ENCODE measurements at regions of chr7 and their contacts with region 1.

Region 1: GRCh38 chr7:127365164-127365956 is 27.1 kb downstream of the ZNF800 start:
- DNase-seq: no peak
- ATAC-seq: no peak
- H3K4me3 ChIP-seq: no peak overlapping the region
- H3K27ac ChIP-seq: no peak overlapping the region
- H3K4me1 ChIP-seq: no peaks in the 10 kb centered on the region
- H3K27me3 ChIP-seq: no peaks in the 10 kb centered on the region
- CTCF ChIP-seq: no peak
- EP300 ChIP-seq: no peak
- POLR2A ChIP-seq: no peak
- RAD21 ChIP-seq: no peak

Region 2: GRCh38 chr7:127290801-127291361 is 74.5 kb before region 1 on chr7:
- CTCF ChIA-PET with region 1: no interaction called
- POLR2A ChIA-PET with region 1: no interaction called
- RAD21 ChIA-PET with region 1: no interaction called
- SMC1A ChIA-PET with region 1: no interaction called
- in situ Hi-C with region 1: no loop called
- intact Hi-C with region 1: no loop called
- DNase-seq: no peak
- ATAC-seq: no peak
- H3K4me3 ChIP-seq: no peak overlapping the region
- H3K27ac ChIP-seq: no peak overlapping the region
- H3K4me1 ChIP-seq: no peaks in the 10 kb centered on the region
- H3K27me3 ChIP-seq: no peaks in the 10 kb centered on the region
- CTCF ChIP-seq: no peak
- EP300 ChIP-seq: no peak
- POLR2A ChIP-seq: no peak
- RAD21 ChIP-seq: no peak

Region 3: DNA sequence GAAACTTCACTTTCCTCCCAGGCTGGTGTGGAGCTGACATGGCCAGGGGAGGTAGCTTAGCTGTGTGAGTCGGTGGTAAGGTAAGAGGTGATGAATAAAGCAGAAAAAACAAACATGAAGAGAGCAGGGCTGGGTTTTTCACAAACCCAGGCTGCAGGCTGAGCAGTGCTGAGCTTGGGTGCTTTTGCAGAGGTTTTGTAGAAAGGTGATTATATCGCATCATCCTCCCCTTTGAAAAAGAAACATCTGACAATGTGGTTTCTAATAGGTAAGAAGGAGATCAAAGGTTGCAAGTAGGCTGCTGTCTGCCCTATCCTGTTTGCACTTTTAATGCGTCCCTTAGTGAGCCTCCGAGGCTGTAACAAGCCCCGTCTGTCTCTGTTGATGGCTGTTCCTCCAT is 43.0 kb before region 1 on chr7:
- CTCF ChIA-PET with region 1: no interaction called
- POLR2A ChIA-PET with region 1: no interaction called
- RAD21 ChIA-PET with region 1: no interaction called
- SMC1A ChIA-PET with region 1: no interaction called
- in situ Hi-C with region 1: no loop called
- intact Hi-C with region 1: no loop called
- DNase-seq: no peak
- ATAC-seq: no peak
- H3K4me3 ChIP-seq: no peak overlapping the region
- H3K27ac ChIP-seq: no peak overlapping the region
- H3K4me1 ChIP-seq: no peaks in the 10 kb centered on the region
- H3K27me3 ChIP-seq: peaks cover 0 to 2% of the 10 kb centered on the region in 2 experiments; a peak in 2 of 4 replicates
- CTCF ChIP-seq: no peak
- EP300 ChIP-seq: no peak
- POLR2A ChIP-seq: no peak
- RAD21 ChIP-seq: no peak

Region 4: DNA sequence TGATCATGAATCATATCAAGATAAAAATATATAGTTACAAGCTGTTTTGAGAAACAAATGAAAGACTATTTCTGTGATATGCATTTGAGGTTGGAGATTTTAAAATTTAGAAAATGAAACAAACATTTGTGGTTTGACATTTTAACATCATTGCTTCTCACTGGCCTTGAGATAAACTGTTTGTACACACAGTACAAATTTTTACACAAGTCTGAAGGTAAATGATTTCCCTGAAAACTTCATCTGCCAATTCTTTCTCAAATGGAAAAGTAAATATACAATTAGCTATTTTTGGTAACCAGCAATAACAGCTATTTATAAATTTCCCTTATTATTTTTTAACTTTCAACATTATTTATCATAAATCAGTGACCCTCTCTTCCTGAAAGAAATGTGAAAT is 11.5 kb before region 1 on chr7:
- CTCF ChIA-PET with region 1: interaction called, 18 read pairs
- POLR2A ChIA-PET with region 1: no interaction called
- RAD21 ChIA-PET with region 1: interaction called, 3 read pairs
- SMC1A ChIA-PET with region 1: interaction called, 4 read pairs
- in situ Hi-C with region 1: no loop called
- intact Hi-C with region 1: no loop called
- DNase-seq: no peak
- ATAC-seq: no peak
- H3K4me3 ChIP-seq: no peak overlapping the region
- H3K27ac ChIP-seq: no peak overlapping the region
- H3K4me1 ChIP-seq: no peaks in the 10 kb centered on the region
- H3K27me3 ChIP-seq: no peaks in the 10 kb centered on the region
- CTCF ChIP-seq: no peak
- EP300 ChIP-seq: no peak
- POLR2A ChIP-seq: no peak
- RAD21 ChIP-seq: no peak

Region 5: GRCh38 chr7:127383123-127383835 is 17.9 kb after region 1 on chr7:
- CTCF ChIA-PET with region 1: interaction called, 6 read pairs
- POLR2A ChIA-PET with region 1: interaction called, 4 read pairs
- RAD21 ChIA-PET with region 1: interaction called, 3 read pairs
- SMC1A ChIA-PET with region 1: interaction called, 8 read pairs
- in situ Hi-C with region 1: no loop called
- intact Hi-C with region 1: loop called (anchors 2 kb)
- DNase-seq: no peak
- ATAC-seq: peak; percentile 48
- H3K4me3 ChIP-seq: no peak overlapping the region
- H3K27ac ChIP-seq: no peak overlapping the region
- H3K4me1 ChIP-seq: peaks cover 3% of the 10 kb centered on the region; the same call in 1 of the 2 replicates
- H3K27me3 ChIP-seq: no peaks in the 10 kb centered on the region
- CTCF ChIP-seq: no peak
- EP300 ChIP-seq: no peak
- POLR2A ChIP-seq: no peak
- RAD21 ChIP-seq: no peak

Measured in GM12878 (cell line).